Activated CD8-positive, alpha-beta memory T cell treated with anti-CD3 and anti-CD28 coated beads, Interleukin-2, amount 10 ng/mL, durations not matched to agents 7 days and 5 days (primary cell): ENCODE measurements at regions of chr5 and their contacts with region 1.

Region 1: GRCh38 chr5:95781101-95781583 is 41.4 kb downstream of the GLRX start:
- DNase-seq: peak; percentile 82
- ATAC-seq: peak; percentile 97
- H3K4me3 Mint-ChIP-seq: no peak overlapping the region
- H3K27ac Mint-ChIP-seq: peak overlapping the region; percentile 14
- H3K4me1 Mint-ChIP-seq: peaks cover 22% of the 10 kb centered on the region
- H3K27me3 Mint-ChIP-seq: no peaks in the 10 kb centered on the region

Region 2: GRCh38 chr5:95327211-95327610 is 453.9 kb before region 1 on chr5:
- CTCF ChIA-PET with region 1: no interaction called
- DNase-seq: no peak
- ATAC-seq: no peak
- H3K4me3 Mint-ChIP-seq: no peak overlapping the region
- H3K27ac Mint-ChIP-seq: no peak overlapping the region
- H3K4me1 Mint-ChIP-seq: no peaks in the 10 kb centered on the region
- H3K27me3 Mint-ChIP-seq: no peaks in the 10 kb centered on the region

Region 3: DNA sequence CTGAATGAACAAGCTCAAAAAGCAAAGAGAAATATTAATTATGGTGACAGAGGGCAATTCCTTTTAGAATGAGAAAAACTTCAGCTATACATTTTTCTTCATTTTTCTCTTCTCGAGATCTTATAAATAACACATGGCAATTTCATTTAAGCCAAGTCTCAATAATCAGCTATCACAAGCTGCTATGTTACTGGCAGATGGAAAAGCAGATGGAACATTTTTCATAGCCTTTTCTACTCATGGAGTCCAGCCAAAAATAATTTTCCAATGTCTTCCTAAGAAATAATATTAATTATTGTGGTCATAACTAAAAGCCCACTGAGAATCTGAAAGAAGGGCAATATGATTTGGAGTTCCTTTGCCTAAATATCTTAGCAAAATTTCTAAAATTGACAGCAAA is 262.0 kb before region 1 on chr5:
- CTCF ChIA-PET with region 1: no interaction called
- DNase-seq: no peak
- ATAC-seq: no peak
- H3K4me3 Mint-ChIP-seq: no peak overlapping the region
- H3K27ac Mint-ChIP-seq: no peak overlapping the region
- H3K4me1 Mint-ChIP-seq: no peaks in the 10 kb centered on the region
- H3K27me3 Mint-ChIP-seq: no peaks in the 10 kb centered on the region

Region 4: DNA sequence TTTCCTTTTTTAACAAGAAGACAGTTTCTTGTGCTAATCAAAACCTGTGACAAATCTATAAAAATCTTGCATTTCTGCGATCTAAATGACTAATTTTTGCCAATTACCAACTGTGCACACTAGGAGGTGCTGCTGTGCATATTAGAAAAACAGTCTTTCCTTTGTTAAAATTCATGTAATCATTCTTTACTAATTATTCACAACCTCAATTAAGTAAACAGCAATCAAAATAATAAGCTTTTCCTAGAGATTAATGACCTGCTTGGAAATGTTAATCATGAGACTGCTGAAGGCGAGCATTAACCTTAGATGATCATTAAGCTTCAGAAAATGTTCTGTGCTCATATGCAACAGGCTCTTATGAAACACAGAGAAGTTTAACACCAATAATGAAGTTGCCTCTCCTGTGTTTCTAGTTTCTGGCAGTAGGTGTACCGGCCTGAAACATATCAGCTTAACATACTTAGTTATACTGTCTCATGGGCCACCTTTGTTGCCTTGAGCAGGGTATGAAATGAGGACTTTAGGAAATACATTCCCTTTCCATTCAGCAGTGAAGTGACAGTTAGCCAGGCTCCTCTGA is 116.8 kb before region 1 on chr5:
- CTCF ChIA-PET with region 1: interaction called, 33 read pairs
- DNase-seq: no peak
- ATAC-seq: no peak
- H3K4me3 Mint-ChIP-seq: no peak overlapping the region
- H3K27ac Mint-ChIP-seq: no peak overlapping the region
- H3K4me1 Mint-ChIP-seq: peaks cover 1% of the 10 kb centered on the region
- H3K27me3 Mint-ChIP-seq: peaks cover 4% of the 10 kb centered on the region

Region 5: GRCh38 chr5:95770830-95771708 is 10.1 kb before region 1 on chr5:
- CTCF ChIA-PET with region 1: interaction called, 42 read pairs
- DNase-seq: no peak
- ATAC-seq: no peak
- H3K4me3 Mint-ChIP-seq: no peak overlapping the region
- H3K27ac Mint-ChIP-seq: no peak overlapping the region
- H3K4me1 Mint-ChIP-seq: peaks cover 6% of the 10 kb centered on the region
- H3K27me3 Mint-ChIP-seq: peaks cover 13% of the 10 kb centered on the region

Region 6: DNA sequence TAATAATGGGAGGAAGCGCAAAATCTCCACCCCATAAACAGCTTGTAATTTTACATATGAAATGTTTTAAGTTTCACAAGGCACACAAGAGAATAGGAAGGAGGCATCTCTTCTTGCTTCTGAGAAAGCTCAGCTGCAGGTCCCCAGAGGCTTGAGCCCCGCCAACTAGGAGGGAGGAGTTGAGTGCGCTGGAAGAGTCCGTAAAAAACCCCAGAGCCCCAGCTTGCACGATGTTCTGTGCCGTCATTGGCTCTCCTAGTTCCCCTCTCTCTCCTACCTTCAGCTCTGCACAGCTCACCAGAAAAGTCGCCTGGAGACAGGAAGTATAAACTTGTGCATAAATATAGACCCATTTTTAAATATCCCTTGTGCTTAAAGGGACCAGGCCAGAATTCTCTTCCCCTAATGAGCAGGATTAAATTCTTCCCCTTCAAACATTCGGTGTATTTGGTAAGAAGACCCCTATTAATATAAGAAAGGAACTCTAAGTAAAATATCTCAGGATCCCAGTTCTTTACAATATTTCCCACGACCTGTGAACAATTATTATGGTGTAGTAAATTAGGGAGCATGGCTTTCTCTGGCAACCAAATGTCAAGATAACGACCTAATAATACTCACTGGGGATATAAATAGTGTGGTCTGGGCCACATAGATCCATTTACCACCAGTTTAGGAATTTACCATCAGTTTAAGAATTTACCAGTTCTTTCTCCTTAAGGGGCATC is 27.7 kb after region 1 on chr5:
- CTCF ChIA-PET with region 1: interaction called, 44 read pairs
- DNase-seq: peak; percentile 91
- ATAC-seq: peak; percentile 100
- H3K4me3 Mint-ChIP-seq: peak overlapping the region; percentile 45
- H3K27ac Mint-ChIP-seq: peak overlapping the region; percentile 86
- H3K4me1 Mint-ChIP-seq: peaks cover 55% of the 10 kb centered on the region
- H3K27me3 Mint-ChIP-seq: no peaks in the 10 kb centered on the region

Region 7: GRCh38 chr5:95822542-95823181 is 41.5 kb after region 1 on chr5 and contains the start of gene GLRX:
- CTCF ChIA-PET with region 1: interaction called, 26 read pairs
- DNase-seq: peak; percentile 80
- ATAC-seq: peak; percentile 54
- H3K4me3 Mint-ChIP-seq: peak within 1 kb of the TSS; percentile 93
- H3K27ac Mint-ChIP-seq: peak within 1 kb of the TSS; percentile 90
- H3K4me1 Mint-ChIP-seq: peaks cover 59% of the 10 kb centered on the region
- H3K27me3 Mint-ChIP-seq: no peaks in the 10 kb centered on the region
- total RNA-seq, gene GLRX: 65.3 to 67.1 TPM

Region 8: GRCh38 chr5:95846554-95847260 is 65.6 kb after region 1 on chr5:
- CTCF ChIA-PET with region 1: interaction called, 353 read pairs
- DNase-seq: peak; percentile 77
- ATAC-seq: peak; percentile 57
- H3K4me3 Mint-ChIP-seq: no peak overlapping the region
- H3K27ac Mint-ChIP-seq: no peak overlapping the region
- H3K4me1 Mint-ChIP-seq: peaks cover 39% of the 10 kb centered on the region
- H3K27me3 Mint-ChIP-seq: peaks cover 14% of the 10 kb centered on the region

Region 9: DNA sequence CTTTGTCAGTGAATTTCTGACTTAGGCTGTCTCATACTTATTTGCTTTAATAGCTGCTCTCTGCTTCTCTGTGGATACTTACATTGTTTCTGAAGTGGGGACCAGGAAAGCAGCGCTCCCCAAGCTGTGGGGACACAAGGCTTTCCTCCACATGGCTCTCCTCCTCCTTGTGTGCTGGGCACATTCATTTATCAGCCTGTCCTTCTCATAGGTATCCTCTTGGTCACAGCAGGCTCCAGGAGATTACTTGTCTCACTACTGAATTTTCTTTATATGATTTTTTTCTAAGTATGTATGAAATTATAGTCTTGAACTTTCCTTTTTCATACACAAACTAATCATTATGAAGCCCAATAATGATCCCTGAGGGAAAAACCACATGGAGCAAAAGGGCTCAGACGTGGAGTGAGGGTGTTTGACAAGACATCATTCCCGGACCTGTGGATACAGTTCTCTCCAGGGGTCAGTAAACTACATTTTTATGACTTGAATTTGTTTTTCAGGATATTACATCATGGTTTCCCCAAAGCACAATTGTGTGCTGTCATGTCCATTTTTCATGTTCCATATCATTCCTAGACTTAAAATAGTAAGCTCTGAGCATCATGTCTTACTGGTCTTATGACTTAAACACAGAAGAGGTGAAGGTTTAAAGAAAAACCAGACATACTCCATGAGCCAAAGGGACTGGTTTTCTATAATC is 417.4 kb after region 1 on chr5:
- CTCF ChIA-PET with region 1: no interaction called
- DNase-seq: no peak
- ATAC-seq: no peak
- H3K4me3 Mint-ChIP-seq: no peak overlapping the region
- H3K27ac Mint-ChIP-seq: no peak overlapping the region
- H3K4me1 Mint-ChIP-seq: no peaks in the 10 kb centered on the region
- H3K27me3 Mint-ChIP-seq: peaks cover 12% of the 10 kb centered on the region